ENCODE measurements at regions of chr20 and their contacts with region 1.

Region 1: DNA sequence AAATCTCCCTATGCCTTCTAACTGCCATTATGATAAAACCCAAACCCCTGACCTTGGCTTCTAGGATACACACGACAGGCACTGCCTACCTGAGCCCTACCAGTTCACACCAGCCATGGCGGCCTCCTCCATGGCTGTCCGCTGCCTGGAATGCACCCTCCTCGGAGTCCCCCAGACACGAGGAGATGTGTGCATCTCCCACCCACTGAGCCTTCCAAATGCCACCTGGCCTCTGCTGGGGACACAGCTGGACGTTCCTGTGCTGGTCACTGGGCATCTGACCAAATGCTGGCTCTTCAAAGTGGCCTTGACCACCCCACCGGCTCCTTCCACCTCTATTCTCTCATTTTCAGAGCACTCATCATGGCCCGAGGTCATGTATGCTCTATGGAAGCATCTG is 47.5 kb downstream of the GINS1 start:
- DNase-seq: no peak
- ATAC-seq: no peak

Region 2: DNA sequence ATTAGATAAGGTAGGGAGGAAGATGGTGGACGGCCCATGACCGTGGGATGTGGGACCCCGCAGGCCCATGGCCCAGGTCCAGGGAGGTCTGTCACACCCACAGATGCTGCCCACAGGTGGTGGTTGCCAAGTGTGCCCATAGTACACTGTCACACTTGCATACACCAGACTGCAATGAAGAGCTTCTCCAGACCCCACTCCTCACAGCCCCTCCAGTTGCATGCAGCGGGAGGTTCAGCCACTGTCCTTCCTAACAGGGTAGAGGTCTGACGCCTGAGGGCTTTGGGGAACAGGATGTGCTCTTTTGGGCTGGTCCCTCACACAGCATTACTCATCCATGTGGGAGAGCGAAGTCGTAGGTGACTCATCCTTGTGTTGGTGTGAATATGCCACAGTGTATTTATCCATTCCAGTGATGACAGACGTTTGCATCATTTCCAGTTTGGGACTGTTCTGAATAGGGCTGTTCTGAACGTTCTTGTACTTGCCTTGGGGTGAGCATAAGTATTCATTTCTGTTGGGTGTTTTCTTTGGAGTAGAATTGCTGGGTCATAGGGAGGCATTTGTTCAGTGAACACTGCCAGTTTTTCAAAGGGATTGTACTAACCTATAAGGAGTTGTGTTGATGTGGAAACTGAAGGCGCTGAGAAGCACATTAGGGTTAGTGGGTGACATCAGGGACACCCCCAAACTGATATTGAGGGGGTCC is 217.2 kb before region 1 on chr20:
- intact Hi-C with region 1: no loop called
- DNase-seq: no peak
- ATAC-seq: peak; percentile 95

Region 3: GRCh38 chr20:25318471-25319240 is 136.3 kb before region 1 on chr20:
- intact Hi-C with region 1: no loop called
- DNase-seq: peak; percentile 53
- ATAC-seq: peak; percentile 52

Region 4: DNA sequence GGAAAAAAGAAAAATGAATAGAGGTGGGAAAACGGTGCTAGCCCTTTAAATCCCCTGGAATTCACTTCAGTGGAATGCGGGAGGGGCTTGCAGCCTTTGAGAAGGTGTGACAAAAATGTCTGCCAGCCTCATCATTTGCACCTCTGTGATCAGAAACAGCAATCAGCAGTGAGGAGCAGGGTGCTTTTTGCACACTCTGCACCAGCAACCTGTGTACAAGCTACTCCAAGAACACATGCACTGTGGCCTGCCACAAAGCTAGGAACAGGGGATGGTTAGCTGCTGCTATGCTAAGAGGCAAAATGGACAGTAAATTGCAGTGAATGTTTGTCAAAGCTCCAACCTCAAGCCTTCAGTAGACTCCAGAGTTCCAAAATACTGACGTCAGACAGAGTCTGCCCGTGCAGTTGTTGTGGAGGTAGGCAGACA is 17.8 kb before region 1 on chr20:
- intact Hi-C with region 1: loop called (anchors 1 kb)
- DNase-seq: no peak
- ATAC-seq: no peak